Activated CD4-positive, alpha-beta T cell treated with anti-CD3 and anti-CD28 coated beads, Interleukin-2, amount 10 ng/mL, durations not matched to agents 24 days and 14 days (primary cell): ENCODE measurements at regions of chr2 and their contacts with region 1.

Region 1: DNA sequence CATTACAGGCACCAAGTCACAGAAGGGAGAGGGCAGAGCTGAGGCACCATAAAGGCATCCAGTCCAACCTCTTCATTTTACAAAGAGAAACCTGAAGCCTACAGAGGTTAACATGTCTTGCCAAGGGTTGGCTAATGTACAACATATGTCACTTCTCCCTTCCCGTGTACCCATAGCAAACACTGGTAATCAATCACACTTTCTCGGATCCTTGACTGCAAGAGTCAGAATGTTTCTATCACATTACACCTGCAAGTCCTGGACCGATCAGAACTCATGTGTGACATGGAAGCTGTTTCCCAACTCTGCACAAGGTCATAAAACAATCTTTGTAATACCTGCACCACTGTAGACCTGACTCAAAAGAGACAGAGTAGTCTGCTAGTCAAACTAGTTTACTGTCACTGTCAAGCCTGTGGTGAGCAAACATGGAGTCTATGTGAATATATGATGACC is 6.0 kb downstream of the ANKRD44 start:
- DNase-seq: peak; percentile 77
- H3K4me3 Mint-ChIP-seq: peak overlapping the region; percentile 90
- H3K27ac Mint-ChIP-seq: peak overlapping the region; percentile 91
- H3K4me1 Mint-ChIP-seq: peaks cover 72% of the 10 kb centered on the region
- H3K27me3 Mint-ChIP-seq: no peaks in the 10 kb centered on the region

Region 2: GRCh38 chr2:197293252-197294007 is 11.2 kb before region 1 on chr2:
- intact Hi-C with region 1: loop called (anchors 1 kb)
- DNase-seq: peak; percentile 74
- H3K4me3 Mint-ChIP-seq: peak overlapping the region; percentile 82
- H3K27ac Mint-ChIP-seq: peak overlapping the region; percentile 96
- H3K4me1 Mint-ChIP-seq: peaks cover 75% of the 10 kb centered on the region
- H3K27me3 Mint-ChIP-seq: no peaks in the 10 kb centered on the region